Natural killer cell (primary cell): ENCODE measurements at regions of chr11 and their contacts with region 1.

Region 1: DNA sequence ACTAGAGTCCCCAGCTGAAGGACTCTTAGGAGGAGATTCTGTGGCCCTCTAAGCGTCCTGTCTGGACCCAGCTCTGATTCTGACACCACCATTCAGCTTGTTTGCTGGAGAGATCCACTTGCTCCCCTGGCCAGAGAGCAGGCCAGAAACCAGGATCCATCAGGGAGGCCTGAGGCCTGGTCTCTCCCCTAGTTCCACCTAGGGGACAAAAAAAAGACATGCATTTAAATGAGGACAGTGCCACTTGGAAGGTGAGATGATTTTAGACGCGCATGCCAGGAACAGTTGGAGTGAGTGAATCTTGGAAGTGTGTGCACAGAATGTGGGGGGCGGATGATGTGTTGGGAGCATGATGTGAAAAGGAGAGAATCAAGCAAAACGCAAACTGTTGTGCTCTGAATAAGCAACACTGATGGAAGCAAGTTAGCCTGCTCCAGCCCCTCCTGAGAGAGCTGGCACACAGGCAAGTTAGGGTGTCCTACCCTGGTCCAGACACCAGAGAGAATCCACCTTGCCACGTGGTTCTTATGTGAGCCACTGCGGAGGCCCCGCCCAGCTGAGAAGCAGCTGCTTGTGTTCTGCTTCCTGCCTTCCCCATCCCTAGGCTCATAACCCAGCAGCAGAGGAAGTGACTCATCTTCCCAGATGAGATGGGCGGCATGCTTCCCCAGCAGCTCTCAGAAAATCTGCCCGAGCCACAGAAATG is 8.0 kb upstream of the SLCO2B1 start:
- DNase-seq: peak; percentile 25 to 81
- ATAC-seq: peak; percentile 75 to 84 (median 75)
- H3K4me3 ChIP-seq: no peak overlapping the region
- H3K4me3 Mint-ChIP-seq: peak overlapping the region; percentile 68
- H3K27ac ChIP-seq: no peak overlapping the region
- H3K27ac Mint-ChIP-seq: peak overlapping the region; percentile 6 to 56
- H3K4me1 ChIP-seq: peaks cover 34% of the 10 kb centered on the region
- H3K4me1 Mint-ChIP-seq: peaks cover 19 to 41% of the 10 kb centered on the region in 2 donors
- H3K27me3 ChIP-seq: no peaks in the 10 kb centered on the region
- H3K27me3 Mint-ChIP-seq: peaks cover 5 to 6% of the 10 kb centered on the region in 2 donors
- CTCF ChIP-seq: no peak

Region 2: GRCh38 chr11:75160192-75160757 is 17.4 kb after region 1 on chr11:
- intact Hi-C with region 1: no loop called
- DNase-seq: no peak
- ATAC-seq: no peak
- H3K4me3 ChIP-seq: no peak overlapping the region
- H3K4me3 Mint-ChIP-seq: no peak overlapping the region
- H3K27ac ChIP-seq: no peak overlapping the region
- H3K27ac Mint-ChIP-seq: no peak overlapping the region
- H3K4me1 ChIP-seq: no peaks in the 10 kb centered on the region
- H3K4me1 Mint-ChIP-seq: no peaks in the 10 kb centered on the region
- H3K27me3 ChIP-seq: no peaks in the 10 kb centered on the region
- H3K27me3 Mint-ChIP-seq: peaks cover 0 to 7% of the 10 kb centered on the region in 2 donors
- CTCF ChIP-seq: no peak

Region 3: GRCh38 chr11:75204685-75205563 is 62.1 kb after region 1 on chr11:
- intact Hi-C with region 1: loop called (anchors 1 kb)
- DNase-seq: peak; percentile 77 to 85
- ATAC-seq: peak; percentile 77 to 95 (median 93)
- H3K4me3 ChIP-seq: no peak overlapping the region
- H3K4me3 Mint-ChIP-seq: no peak overlapping the region
- H3K27ac ChIP-seq: no peak overlapping the region
- H3K27ac Mint-ChIP-seq: no peak overlapping the region
- H3K4me1 ChIP-seq: no peaks in the 10 kb centered on the region
- H3K4me1 Mint-ChIP-seq: no peaks in the 10 kb centered on the region
- H3K27me3 ChIP-seq: no peaks in the 10 kb centered on the region
- H3K27me3 Mint-ChIP-seq: peaks cover 0 to 6% of the 10 kb centered on the region in 2 donors
- CTCF ChIP-seq: peak; percentile 84

Region 4: DNA sequence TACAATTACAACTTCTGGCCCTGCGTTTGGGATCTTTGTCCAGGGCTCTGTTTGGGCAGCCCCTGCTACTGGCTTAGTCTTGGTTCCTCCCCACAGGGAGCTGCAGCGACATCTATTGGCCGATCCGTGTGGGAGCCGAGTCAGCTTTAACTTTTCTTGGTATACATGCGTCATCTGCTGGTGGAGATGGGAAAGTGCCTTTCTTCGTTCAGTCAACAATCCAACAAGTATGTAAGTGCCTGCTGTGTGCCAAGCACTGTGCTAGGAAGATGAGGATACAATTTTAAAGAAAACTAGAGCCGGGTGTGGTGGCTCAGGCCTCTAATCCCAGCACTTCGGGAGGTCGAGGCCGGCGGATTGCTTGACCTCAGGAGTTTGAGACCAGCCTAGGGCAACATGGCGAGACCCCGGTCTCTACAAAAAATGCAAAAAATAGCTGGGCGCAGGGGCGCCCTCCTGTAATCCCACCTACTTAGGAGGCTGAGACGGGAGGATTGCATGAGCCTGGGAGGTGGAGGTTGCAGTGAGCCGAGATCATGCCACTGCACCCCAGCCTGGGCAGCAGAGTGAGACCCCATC is 105.9 kb after region 1 on chr11:
- intact Hi-C with region 1: loop called (anchors 1 kb)
- DNase-seq: peak; percentile 82 to 94
- ATAC-seq: peak; percentile 94 to 100 (median 99)
- H3K4me3 ChIP-seq: no peak overlapping the region
- H3K4me3 Mint-ChIP-seq: no peak overlapping the region
- H3K27ac ChIP-seq: no peak overlapping the region
- H3K27ac Mint-ChIP-seq: no peak overlapping the region
- H3K4me1 ChIP-seq: peaks cover 3% of the 10 kb centered on the region
- H3K4me1 Mint-ChIP-seq: peaks cover 0 to 7% of the 10 kb centered on the region in 2 donors
- H3K27me3 ChIP-seq: peaks cover 2% of the 10 kb centered on the region
- H3K27me3 Mint-ChIP-seq: peaks cover 14 to 27% of the 10 kb centered on the region in 2 donors
- CTCF ChIP-seq: peak; percentile 100